ENCODE measurements at regions of chrX and their contacts with region 1.

Region 1: DNA sequence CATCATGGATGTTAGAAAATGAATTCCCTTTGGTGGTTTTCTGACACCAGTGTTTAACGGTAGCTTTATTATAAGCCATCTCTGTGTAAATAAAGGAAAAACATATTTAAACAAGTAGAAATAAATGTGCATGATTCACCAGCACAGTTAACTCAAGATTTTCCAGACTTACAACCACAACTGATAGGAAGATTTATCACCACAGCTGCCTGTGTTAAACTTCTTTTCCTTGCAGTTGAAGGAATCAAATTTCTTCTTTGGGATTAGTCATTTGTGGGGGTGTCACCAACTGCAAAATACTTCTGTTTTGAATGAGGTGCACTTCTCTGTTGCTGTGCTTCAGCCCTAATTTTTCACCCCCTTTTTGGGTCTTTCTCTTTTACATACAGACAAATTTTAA is 128.1 kb upstream of the STK26 start:
- DNase-seq: peak; percentile 1
- H3K27ac ChIP-seq: no peak overlapping the region
- CTCF ChIP-seq: no peak

Region 2: GRCh38 chrX:132092439-132093065 is 197.6 kb after region 1 on chrX:
- CTCF ChIA-PET with region 1: interaction called, 10 read pairs
- POLR2A ChIA-PET with region 1: no interaction called
- DNase-seq: peak; percentile 30
- H3K27ac ChIP-seq: no peak overlapping the region
- CTCF ChIP-seq: peak; percentile 37